H1 (cell line): ENCODE measurements at regions of chr20 and their contacts with region 1.

Region 1: GRCh38 chr20:2871661-2872458 is 1.4 kb upstream of the PTPRA start:
- DNase-seq: peak in 1 of 2 experiments; percentile 52
- H3K4me3 ChIP-seq: peak overlapping the region; percentile 70 to 82 (median 78)
- H3K27ac ChIP-seq: no peak overlapping the region
- H3K4me1 ChIP-seq: peaks cover 0 to 7% (median 4%) of the 10 kb centered on the region in 4 experiments; a peak in 6 of 7 replicates
- H3K27me3 ChIP-seq: peaks cover 0 to 24% (median 14%) of the 10 kb centered on the region in 4 experiments; a peak in 5 of 7 replicates
- CTCF ChIP-seq: no peak
- EP300 ChIP-seq: no peak
- POLR2A ChIP-seq: no peak
- RAD21 ChIP-seq: no peak

Region 2: GRCh38 chr20:2859330-2860121 is 12.3 kb before region 1 on chr20:
- CTCF ChIA-PET with region 1: interaction called, 23 read pairs
- POLR2A ChIA-PET with region 1: interaction called, 12 read pairs
- DNase-seq: no peak
- H3K4me3 ChIP-seq: no peak overlapping the region
- H3K27ac ChIP-seq: no peak overlapping the region
- H3K4me1 ChIP-seq: no peaks in the 10 kb centered on the region
- H3K27me3 ChIP-seq: no peaks in the 10 kb centered on the region
- CTCF ChIP-seq: no peak
- EP300 ChIP-seq: no peak
- POLR2A ChIP-seq: no peak
- RAD21 ChIP-seq: no peak